AG04449 (cell line): ENCODE measurements at regions of chr7 and their contacts with region 1.

Region 1: DNA sequence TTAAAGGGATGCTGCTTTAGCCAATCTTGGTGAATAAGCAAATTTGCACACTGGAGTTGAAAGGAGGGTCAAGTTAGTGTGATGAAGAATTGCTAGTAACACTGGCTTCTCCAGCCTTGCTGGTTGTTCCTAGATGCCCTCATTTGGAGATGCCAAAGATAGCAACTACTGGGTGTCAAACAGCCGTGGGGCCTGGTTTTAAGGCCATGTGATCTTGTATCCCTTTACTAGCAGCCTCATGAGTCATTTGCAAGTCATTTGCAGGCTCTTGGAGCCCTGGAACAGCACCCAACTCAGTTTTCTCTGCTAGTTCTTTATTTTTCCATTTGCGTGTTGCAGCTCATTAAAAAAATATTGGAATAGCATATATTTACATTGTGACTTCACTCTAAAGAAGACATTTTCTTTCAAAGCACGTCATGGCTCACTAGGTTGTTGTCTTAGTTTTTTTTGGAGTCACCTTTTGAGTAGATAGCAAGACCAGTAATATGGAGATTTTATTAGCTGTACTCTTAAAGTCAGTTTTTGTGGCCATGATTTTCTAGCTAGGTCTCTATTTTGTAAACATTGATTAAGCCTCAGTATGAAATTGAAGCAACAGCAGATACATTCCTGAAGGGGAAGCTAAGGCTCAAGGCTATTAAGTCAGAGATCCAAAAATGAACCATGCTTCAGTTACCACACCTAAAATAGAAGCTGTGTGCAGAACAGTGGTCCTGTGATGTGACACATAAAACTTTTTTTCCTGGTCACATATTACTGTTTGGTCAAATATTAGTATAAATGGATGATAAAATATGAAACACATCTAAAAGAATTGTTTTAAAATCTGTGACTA is 1.3 kb downstream of the LSMEM1 start:
- DNase-seq: peak; percentile 96
- H3K4me3 ChIP-seq: no peak overlapping the region
- CTCF ChIP-seq: no peak

Region 2: DNA sequence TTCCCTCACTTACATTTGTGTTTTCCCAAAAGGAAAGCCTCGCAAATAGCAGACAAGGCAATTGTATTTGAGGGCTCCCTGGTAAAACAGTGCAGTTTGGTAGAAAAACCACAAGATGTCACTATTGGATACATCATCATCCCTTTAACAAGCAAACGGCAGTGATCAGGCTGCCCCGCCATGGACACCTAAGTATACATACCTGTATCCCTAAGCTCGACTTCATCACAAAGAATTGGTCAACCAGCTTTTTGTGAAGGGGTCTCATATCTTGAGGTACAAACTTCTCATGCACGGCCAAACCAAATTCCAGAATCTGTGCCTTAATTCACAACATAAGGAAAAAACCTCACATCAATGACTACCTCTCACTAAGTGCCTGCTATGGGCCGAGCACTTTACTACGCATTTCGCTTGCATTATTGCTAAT is 740.2 kb before region 1 on chr7:
- CTCF ChIA-PET with region 1: interaction called, 10 read pairs
- POLR2A ChIA-PET with region 1: no interaction called
- DNase-seq: no peak
- H3K4me3 ChIP-seq: no peak overlapping the region
- CTCF ChIP-seq: peak; percentile 62

Region 3: GRCh38 chr7:112462236-112462635 is 19.8 kb before region 1 on chr7:
- CTCF ChIA-PET with region 1: interaction called, 19 read pairs
- POLR2A ChIA-PET with region 1: no interaction called
- DNase-seq: no peak
- H3K4me3 ChIP-seq: no peak overlapping the region
- CTCF ChIP-seq: no peak

Region 4: DNA sequence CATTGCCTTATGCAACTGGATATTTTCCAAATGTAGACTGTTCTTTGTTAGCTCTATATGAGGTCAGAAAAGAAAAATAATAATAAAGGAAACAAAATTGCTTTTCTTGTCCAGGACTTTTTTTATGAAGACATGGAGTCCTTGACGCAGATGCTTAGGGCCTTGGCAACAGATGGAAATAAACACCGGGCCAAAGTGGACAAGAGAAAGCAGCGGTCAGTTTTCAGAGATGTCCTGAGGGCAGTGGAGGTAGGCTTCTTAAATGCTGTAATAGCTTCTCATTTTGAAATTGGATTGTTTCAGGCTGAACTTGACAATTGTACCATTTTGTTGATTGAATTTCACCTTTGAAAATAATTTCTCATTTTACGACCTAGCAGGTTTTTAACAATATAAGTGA is 14.2 kb before region 1 on chr7:
- CTCF ChIA-PET with region 1: interaction called, 10 read pairs
- POLR2A ChIA-PET with region 1: interaction called, 3 read pairs
- DNase-seq: no peak
- H3K4me3 ChIP-seq: no peak overlapping the region
- CTCF ChIP-seq: no peak